Panc1 (cell line): ENCODE measurements at regions of chr9 and their contacts with region 1.

Region 1: GRCh38 chr9:34279411-34279810 is 49.7 kb downstream of the KIF24 start:
- DNase-seq: no peak
- ATAC-seq: no peak
- H3K4me3 ChIP-seq: no peak overlapping the region
- H3K27ac ChIP-seq: no peak overlapping the region
- H3K4me1 ChIP-seq: no peaks in the 10 kb centered on the region
- H3K27me3 ChIP-seq: no peaks in the 10 kb centered on the region
- CTCF ChIP-seq: no peak

Region 2: DNA sequence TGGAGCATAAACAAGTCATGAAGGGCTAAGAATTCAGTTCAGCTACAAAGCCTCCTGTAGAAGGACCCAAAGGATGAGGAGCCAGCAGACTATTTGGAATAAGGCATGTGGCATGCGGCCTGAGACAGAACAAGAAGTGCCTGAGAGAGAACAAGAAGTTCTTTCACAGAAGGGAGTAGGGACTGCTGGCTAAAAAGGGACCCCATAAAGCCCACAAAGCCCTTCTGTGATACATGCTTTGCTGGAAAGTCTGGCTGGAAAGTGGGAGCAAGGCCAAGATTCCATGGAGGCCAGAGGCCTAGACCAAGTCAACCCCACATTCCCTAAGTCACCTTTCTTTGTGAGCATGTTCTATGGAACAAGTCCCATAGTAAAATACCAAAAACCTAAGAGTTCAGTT is 194.8 kb before region 1 on chr9:
- CTCF ChIA-PET with region 1: no interaction called
- POLR2A ChIA-PET with region 1: no interaction called
- in situ Hi-C with region 1: no loop called
- intact Hi-C with region 1: no loop called
- DNase-seq: no peak
- ATAC-seq: no peak
- H3K4me3 ChIP-seq: no peak overlapping the region
- H3K27ac ChIP-seq: no peak overlapping the region
- H3K4me1 ChIP-seq: no peaks in the 10 kb centered on the region
- H3K27me3 ChIP-seq: no peaks in the 10 kb centered on the region
- CTCF ChIP-seq: no peak

Region 3: GRCh38 chr9:34139477-34140146 is 139.8 kb before region 1 on chr9:
- CTCF ChIA-PET with region 1: no interaction called
- POLR2A ChIA-PET with region 1: no interaction called
- in situ Hi-C with region 1: no loop called
- intact Hi-C with region 1: no loop called
- DNase-seq: no peak
- ATAC-seq: peak; percentile 88
- H3K4me3 ChIP-seq: no peak overlapping the region
- H3K27ac ChIP-seq: no peak overlapping the region
- H3K4me1 ChIP-seq: no peaks in the 10 kb centered on the region
- H3K27me3 ChIP-seq: no peaks in the 10 kb centered on the region
- CTCF ChIP-seq: no peak

Region 4: GRCh38 chr9:34332076-34332964 is 52.9 kb after region 1 on chr9:
- CTCF ChIA-PET with region 1: no interaction called
- POLR2A ChIA-PET with region 1: interaction called, 17 read pairs
- in situ Hi-C with region 1: no loop called
- intact Hi-C with region 1: no loop called
- DNase-seq: peak; percentile 30
- ATAC-seq: no peak
- H3K4me3 ChIP-seq: no peak overlapping the region
- H3K27ac ChIP-seq: no peak overlapping the region
- H3K4me1 ChIP-seq: peaks cover 24% of the 10 kb centered on the region
- H3K27me3 ChIP-seq: no peaks in the 10 kb centered on the region
- CTCF ChIP-seq: peak; percentile 75

Region 5: DNA sequence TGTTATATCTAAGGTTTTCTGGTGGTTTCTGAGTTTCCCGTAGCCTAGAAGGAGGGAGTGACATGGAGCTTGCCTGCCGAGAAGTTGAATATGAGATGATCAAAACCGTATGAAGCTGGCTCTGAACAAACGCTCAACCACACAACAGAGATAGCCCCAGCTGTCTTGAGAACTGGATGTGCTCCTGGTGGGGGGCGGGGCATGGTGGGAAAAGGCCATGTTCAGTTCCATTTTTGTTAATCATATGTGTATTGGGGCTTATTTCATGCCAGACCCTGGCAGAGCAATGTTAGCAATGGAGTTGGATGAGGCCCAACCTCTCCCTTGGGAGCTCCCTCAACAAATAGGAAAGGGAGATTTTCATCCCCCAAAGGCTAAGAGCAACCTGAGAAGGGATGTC is 406.8 kb after region 1 on chr9:
- CTCF ChIA-PET with region 1: no interaction called
- POLR2A ChIA-PET with region 1: no interaction called
- in situ Hi-C with region 1: no loop called
- intact Hi-C with region 1: no loop called
- DNase-seq: no peak
- ATAC-seq: no peak
- H3K4me3 ChIP-seq: no peak overlapping the region
- H3K27ac ChIP-seq: no peak overlapping the region
- H3K4me1 ChIP-seq: no peaks in the 10 kb centered on the region
- H3K27me3 ChIP-seq: no peaks in the 10 kb centered on the region
- CTCF ChIP-seq: no peak

Region 6: DNA sequence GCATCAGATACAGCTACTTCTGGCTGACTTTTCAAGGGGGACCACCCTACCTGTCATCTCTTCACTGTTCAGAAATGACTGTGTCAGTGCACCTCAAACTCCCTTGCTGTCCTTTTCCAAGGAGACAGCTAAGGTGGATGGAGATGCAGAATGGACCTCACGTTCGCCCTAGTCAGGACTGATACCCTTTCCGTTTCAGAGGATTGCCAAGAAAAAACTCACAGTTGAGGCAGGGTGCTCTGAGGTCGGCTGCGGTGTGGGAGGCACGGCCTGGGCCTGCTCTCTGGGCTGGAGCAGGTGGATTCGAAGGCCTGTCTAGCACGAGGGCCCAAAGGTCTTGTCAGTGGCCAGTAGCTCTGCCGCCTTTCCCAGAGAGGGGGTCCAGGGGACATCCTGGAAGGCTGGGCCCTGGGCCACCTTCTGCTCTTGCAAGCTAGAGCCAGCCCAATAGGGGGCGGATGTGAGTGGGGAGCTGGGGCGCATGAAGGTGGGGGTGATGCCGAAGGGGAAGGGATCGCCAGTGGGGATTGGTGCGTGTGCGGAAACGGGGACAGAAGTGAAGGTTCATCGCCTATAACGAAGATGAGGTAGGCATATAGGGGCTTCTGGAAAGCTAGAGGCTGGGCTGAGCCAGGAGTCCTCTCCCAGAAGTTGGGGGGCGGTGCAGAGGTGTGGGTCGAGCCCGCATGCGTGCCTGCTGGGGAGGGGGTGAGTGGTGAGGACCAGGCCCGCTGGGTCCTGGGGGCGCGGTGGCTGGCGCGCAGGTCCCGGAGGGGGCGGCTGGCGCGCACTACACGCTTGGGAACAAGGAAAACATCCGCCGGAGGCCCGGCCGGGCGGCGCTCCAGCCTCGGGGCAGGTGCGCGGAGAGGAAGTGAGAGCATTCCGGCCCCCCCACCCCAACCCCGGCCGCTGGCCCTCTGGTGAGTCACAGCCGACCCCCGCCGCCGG is 1477.1 kb after region 1 on chr9:
- CTCF ChIA-PET with region 1: no interaction called
- POLR2A ChIA-PET with region 1: interaction called, 12 read pairs
- in situ Hi-C with region 1: no loop called
- intact Hi-C with region 1: no loop called
- DNase-seq: no peak
- ATAC-seq: peak; percentile 87
- H3K4me3 ChIP-seq: peak overlapping the region; percentile 75 to 92
- H3K27ac ChIP-seq: peak overlapping the region; percentile 88
- H3K4me1 ChIP-seq: peaks cover 22% of the 10 kb centered on the region
- H3K27me3 ChIP-seq: no peaks in the 10 kb centered on the region
- CTCF ChIP-seq: no peak